ENCODE measurements at regions of chr11 and their contacts with region 1.

Region 1: GRCh38 chr11:106322111-106322510 is 244.6 kb downstream of the AASDHPPT start:
- DNase-seq: no peak
- H3K4me3 ChIP-seq: no peak overlapping the region
- H3K27ac ChIP-seq: no peak overlapping the region
- H3K27me3 ChIP-seq: no peaks in the 10 kb centered on the region
- CTCF ChIP-seq: no peak

Region 2: DNA sequence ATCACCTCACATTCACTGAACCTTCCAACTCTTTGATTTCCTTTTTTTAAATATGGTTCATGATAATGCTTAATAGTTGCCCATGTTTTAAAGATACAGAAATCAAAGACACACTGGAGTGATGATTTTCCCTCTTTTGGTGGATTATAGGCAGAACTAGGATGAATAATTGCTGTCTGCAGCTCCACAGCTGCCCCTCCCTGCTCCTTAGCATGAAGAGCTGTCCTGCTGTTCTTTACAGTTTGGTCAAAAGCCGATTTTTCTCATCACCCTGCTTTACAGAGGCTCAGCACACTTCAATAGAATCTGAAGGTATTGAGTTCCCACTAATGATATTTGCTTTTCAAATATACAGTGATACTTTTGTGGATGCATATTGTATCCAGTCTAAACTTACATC is 42.1 kb before region 1 on chr11:
- CTCF ChIA-PET with region 1: no interaction called
- POLR2A ChIA-PET with region 1: no interaction called
- DNase-seq: no peak
- H3K4me3 ChIP-seq: no peak overlapping the region
- H3K27ac ChIP-seq: no peak overlapping the region
- H3K27me3 ChIP-seq: no peaks in the 10 kb centered on the region
- CTCF ChIP-seq: no peak

Region 3: DNA sequence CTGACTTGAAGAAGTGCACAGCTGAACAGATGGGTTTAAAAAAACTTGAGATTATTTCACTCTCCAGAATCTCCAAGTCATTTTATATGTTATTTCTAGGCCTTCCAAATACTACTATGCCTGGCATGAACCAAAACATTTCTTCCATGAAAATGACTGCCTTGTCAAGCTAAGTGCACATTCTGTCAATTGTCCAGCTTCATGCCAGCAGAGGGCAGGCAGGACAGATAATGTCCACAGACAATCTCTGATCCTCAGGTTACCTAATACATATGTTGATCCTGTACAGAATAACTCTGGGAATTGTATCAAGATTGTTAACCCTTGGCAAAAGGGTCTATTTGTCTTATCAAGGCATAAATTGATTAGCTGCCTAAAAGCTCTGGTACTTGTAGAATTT is 15.2 kb before region 1 on chr11:
- CTCF ChIA-PET with region 1: interaction called, 18 read pairs
- POLR2A ChIA-PET with region 1: no interaction called
- DNase-seq: no peak
- H3K4me3 ChIP-seq: no peak overlapping the region
- H3K27ac ChIP-seq: no peak overlapping the region
- H3K27me3 ChIP-seq: no peaks in the 10 kb centered on the region
- CTCF ChIP-seq: peak; percentile 26; the same call in 1 of the 2 replicates

Measured in AG04450 (cell line).